ENCODE measurements at regions of chr2 and their contacts with region 1.

Region 1: GRCh38 chr2:13006829-13007717 is 290.3 kb downstream of the TRIB2 start:
- DNase-seq: peak; percentile 37
- H3K4me3 ChIP-seq: no peak overlapping the region
- H3K27ac ChIP-seq: no peak overlapping the region
- H3K27me3 ChIP-seq: no peaks in the 10 kb centered on the region
- CTCF ChIP-seq: peak; percentile 79

Region 2: DNA sequence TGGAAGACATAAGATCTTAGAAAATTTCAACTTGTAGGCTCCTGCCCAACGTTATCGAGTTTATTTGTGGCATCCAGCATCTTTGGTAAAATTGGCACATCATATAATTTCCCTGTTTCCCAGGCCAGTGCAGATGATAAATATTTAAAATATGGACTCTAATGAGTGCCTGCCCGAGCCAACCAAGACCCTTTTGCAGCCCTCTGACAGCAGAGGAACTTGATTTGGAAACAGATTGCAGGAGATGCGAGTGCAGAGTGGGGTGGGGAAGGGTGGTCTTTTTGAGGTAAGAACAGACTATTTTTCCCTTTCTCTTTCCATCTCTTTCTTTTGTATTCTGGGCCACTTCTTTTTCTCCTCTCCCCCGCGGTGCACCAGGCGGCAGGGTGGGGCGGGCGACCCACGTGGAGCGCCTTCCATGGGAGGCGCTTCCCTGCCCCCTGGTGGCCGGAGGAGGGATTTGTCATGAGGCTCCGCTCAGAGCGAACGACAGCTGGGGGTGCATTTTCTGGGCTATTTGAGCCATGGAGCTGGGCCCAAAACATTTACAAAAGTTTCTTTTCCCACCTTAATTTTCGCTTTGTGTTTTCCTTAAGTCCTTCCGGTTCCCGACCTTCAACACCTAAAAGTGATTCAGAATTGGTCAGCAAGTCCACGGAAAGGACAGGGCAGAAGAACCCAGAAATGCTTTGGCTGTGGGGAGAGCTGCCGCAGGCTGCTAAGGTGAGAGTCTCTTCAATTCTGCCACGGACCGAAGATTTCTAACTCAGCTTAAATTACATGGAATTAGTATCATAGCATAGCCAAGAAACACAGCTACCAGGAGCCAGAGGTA is 1227.9 kb before region 1 on chr2:
- CTCF ChIA-PET with region 1: interaction called, 21 read pairs
- POLR2A ChIA-PET with region 1: no interaction called
- DNase-seq: no peak
- H3K4me3 ChIP-seq: no peak overlapping the region
- H3K27ac ChIP-seq: no peak overlapping the region
- H3K27me3 ChIP-seq: no peaks in the 10 kb centered on the region
- CTCF ChIP-seq: peak; percentile 95

Region 3: GRCh38 chr2:11829947-11830707 is 1176.9 kb before region 1 on chr2:
- CTCF ChIA-PET with region 1: interaction called, 22 read pairs
- POLR2A ChIA-PET with region 1: no interaction called
- DNase-seq: peak; percentile 89
- H3K4me3 ChIP-seq: peak overlapping the region; percentile 47
- H3K27ac ChIP-seq: peak overlapping the region; percentile 90
- H3K27me3 ChIP-seq: no peaks in the 10 kb centered on the region
- CTCF ChIP-seq: peak; percentile 39; the same call in 1 of the 2 replicates

Region 4: DNA sequence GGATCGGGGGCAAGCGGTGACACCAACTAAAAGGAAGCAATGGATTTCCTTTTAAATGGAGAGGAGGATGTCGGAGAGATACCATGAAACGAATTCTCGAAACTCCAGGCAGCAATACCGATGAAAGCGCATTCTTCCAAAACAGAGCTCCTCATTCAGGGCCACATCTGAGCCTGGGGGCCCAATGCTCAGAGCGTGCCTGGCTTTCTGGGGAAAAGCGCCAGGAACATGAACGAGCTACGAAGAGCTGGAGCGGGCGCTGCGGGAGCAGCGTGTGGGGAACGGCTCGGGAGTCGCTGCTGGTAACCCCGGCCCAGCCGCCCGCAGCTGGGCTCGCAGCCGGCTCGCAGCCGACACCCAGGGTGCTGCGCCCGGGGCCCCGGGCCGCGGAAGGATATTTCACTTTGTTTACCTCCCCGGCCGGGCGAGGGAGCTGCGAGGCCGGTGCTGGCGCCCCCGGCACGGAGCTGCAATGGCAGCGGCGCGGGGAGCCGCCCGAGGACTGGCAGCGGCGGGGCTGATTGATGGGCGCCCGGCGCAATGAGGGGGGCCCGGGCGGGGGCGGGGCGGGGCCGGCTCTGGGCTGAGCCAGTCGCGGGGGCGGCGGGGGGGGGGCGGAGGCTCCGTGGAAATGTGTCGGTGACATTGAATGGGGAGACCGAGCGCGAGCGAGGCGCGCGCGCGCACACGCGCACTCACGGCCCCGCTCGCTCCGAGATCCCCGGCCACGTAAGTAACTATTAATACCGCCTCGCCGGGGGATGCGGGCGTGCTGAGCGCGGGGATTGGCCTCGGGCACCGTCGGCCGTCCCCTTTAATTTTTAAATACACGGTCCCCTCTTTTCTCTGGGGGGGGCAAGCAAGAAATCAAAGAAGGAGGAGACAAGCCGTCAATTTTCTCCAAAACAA is 290.5 kb before region 1 on chr2 and contains the start of gene TRIB2:
- CTCF ChIA-PET with region 1: interaction called, 65 read pairs
- POLR2A ChIA-PET with region 1: interaction called, 6 read pairs
- DNase-seq: peak; percentile 65
- H3K4me3 ChIP-seq: peak within 1 kb of the TSS; percentile 87
- H3K27ac ChIP-seq: peak within 1 kb of the TSS; percentile 89
- H3K27me3 ChIP-seq: no peaks in the 10 kb centered on the region
- CTCF ChIP-seq: no peak
- polyA plus RNA-seq, gene TRIB2: 12.2 and 13.0 TPM in 2 replicates

Region 5: DNA sequence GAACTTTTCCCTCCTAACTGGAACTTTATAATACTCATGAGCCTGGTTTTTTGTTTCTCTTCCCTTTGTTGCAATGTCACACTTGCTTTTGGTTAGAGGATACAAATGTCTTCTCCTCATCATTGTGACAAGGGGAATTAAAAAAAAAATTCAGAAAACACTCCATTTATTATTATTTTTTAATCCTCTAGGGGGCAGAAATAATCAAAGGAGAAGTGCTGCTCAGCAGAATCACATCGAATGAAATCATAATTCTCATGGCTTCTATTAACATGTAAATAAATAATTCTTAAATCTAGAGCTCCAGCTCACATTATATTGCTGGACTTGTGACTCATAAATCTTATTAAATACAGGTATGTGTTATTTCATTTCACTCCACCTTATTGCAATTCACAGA is 16.6 kb before region 1 on chr2:
- CTCF ChIA-PET with region 1: interaction called, 22 read pairs
- POLR2A ChIA-PET with region 1: no interaction called
- DNase-seq: no peak
- H3K4me3 ChIP-seq: no peak overlapping the region
- H3K27ac ChIP-seq: no peak overlapping the region
- H3K27me3 ChIP-seq: no peaks in the 10 kb centered on the region
- CTCF ChIP-seq: peak; percentile 44

Region 6: GRCh38 chr2:13180729-13181128 is 173.7 kb after region 1 on chr2:
- CTCF ChIA-PET with region 1: no interaction called
- POLR2A ChIA-PET with region 1: no interaction called
- DNase-seq: no peak
- H3K4me3 ChIP-seq: no peak overlapping the region
- H3K27ac ChIP-seq: no peak overlapping the region
- H3K27me3 ChIP-seq: no peaks in the 10 kb centered on the region
- CTCF ChIP-seq: no peak

Measured in AG04450 (cell line).